H1 (cell line): ENCODE measurements at regions of chr5 and their contacts with region 1.

Region 1: GRCh38 chr5:82225525-82226172 is 52.5 kb downstream of the RPS23 start:
- DNase-seq: peak; percentile 33 to 85
- H3K4me3 ChIP-seq: no peak overlapping the region
- H3K27ac ChIP-seq: no peak overlapping the region
- H3K4me1 ChIP-seq: peaks cover 0 to 9% (median 0%) of the 10 kb centered on the region in 4 experiments; a peak in 3 of 7 replicates
- H3K27me3 ChIP-seq: no peaks in the 10 kb centered on the region
- CTCF ChIP-seq: peak; percentile 52 to 89 (median 87)
- EP300 ChIP-seq: no peak
- POLR2A ChIP-seq: no peak
- RAD21 ChIP-seq: peak; percentile 98 to 99

Region 2: DNA sequence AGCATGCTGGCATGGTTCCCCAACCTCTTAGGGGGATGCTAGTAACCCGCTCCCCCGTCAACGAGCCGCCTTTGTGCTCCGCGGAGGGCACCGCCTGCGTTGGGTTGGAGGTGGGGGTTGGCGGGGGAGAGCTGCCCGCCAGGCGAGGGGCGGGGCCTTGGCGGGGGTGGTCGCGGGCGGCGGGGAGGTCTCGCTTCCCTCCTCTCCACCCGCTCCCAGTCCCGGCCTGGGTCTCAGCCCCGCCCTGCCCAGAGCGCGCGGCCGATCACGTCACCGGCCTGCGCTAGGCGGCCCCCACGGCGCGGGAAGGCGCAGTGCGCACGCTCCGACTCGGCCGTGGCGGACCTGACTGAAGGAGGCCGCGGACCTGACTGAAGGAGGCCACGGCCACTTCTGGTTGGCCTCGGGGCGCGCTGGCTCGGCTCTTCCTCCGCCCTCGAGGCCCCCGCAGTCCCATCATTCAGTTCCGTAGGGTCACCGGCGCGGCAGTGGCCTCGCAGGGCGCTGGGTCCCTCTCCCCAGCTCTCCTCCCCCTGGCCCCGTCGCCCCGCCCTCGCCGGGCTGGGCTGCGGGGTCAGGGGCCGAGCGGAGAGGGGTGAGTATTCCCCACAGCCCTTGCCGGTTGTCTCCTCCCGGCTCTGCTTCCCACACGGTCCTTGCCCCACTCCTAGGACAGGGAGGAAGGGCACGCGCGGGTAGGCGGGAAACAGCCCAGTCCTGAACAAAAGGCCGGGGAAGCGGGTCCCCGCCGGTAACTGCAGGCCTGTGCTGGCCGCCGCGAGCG is 253.7 kb before region 1 on chr5 and contains the start of gene ATG10:
- CTCF ChIA-PET with region 1: interaction called, 10 read pairs
- POLR2A ChIA-PET with region 1: no interaction called
- DNase-seq: peak; percentile 80 to 91
- H3K4me3 ChIP-seq: peak within 1 kb of the TSS; percentile 65 to 76 (median 66)
- H3K27ac ChIP-seq: peak within 1 kb of the TSS; percentile 94
- H3K4me1 ChIP-seq: peaks cover 0 to 8% (median 1%) of the 10 kb centered on the region in 4 experiments; a peak in 1 of 7 replicates
- H3K27me3 ChIP-seq: no peaks in the 10 kb centered on the region
- CTCF ChIP-seq: no peak
- EP300 ChIP-seq: no peak; a peak in 1 of 3 replicates
- POLR2A ChIP-seq: peak; percentile 91 to 98
- RAD21 ChIP-seq: peak in 1 of 2 experiments; percentile 7; a peak in 1 of 4 replicates
- total RNA-seq, gene ATG10: 8.8 and 9.4 TPM in 2 replicates

Region 3: DNA sequence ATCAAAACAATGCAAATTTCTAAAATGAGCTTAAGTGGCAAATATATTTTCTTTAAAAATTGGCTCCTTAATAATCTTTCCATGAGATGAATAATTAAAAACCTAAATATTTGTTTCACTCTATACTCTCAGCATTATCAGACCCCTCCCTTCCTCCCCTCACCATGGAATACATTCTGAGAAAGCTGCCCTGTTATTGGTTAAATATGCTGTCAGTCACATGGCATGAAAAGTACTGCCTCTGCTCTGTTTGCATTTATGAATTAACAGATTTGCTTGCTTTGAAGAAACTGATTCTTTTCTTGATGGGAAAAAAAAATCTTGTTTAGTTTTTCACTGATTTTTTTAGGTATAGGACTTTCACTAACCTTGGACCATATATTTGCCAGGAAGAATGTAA is 69.5 kb after region 1 on chr5:
- CTCF ChIA-PET with region 1: no interaction called
- POLR2A ChIA-PET with region 1: no interaction called
- DNase-seq: no peak
- H3K4me3 ChIP-seq: no peak overlapping the region
- H3K27ac ChIP-seq: no peak overlapping the region
- H3K4me1 ChIP-seq: peaks cover 8 to 18% (median 10%) of the 10 kb centered on the region in 4 experiments; a peak in 6 of 7 replicates
- H3K27me3 ChIP-seq: peaks cover 0 to 1% (median 0%) of the 10 kb centered on the region in 4 experiments; a peak in 4 of 7 replicates
- CTCF ChIP-seq: no peak
- EP300 ChIP-seq: no peak
- POLR2A ChIP-seq: no peak
- RAD21 ChIP-seq: no peak